Panc1 (cell line): ENCODE measurements at regions of chr3 and their contacts with region 1.

Region 1: GRCh38 chr3:68876112-68876713 is 56.1 kb downstream of the TAFA4 start:
- DNase-seq: peak; percentile 47
- ATAC-seq: peak; percentile 60; the same call in 1 of the 2 replicates
- H3K4me3 ChIP-seq: no peak overlapping the region
- H3K27ac ChIP-seq: no peak overlapping the region
- H3K4me1 ChIP-seq: no peaks in the 10 kb centered on the region
- H3K27me3 ChIP-seq: no peaks in the 10 kb centered on the region; the same call in 1 of the 2 replicates
- CTCF ChIP-seq: peak; percentile 74; the same call in 1 of the 2 replicates

Region 2: DNA sequence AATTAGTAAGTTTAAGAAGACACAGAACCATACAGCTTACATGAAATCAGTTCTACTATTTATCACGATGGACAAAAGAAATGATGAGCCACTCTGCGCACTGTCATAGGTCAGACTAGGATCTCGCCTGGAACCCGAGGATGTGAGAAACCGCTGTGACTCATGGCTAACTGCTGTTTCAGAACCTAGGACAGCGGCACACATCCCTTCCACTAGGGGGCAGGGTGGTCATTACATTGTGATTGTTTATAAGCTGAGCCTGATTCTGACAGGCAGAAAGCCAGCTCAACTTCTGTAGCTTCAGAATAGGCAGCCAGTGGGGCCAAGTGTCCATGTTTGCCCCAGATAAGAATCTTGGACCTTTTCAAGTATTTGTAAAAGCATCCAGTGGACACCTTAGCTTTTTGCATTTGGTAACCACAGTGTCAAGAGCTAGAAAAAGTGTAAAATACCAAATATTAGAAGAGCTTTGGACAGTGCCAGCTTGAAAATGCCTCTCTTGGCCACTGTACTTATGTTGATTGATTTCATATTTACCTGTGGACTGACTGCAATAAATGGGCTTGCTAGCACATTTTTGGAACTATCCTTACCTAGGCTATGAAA is 1762.3 kb before region 1 on chr3:
- CTCF ChIA-PET with region 1: no interaction called
- POLR2A ChIA-PET with region 1: no interaction called
- in situ Hi-C with region 1: no loop called
- intact Hi-C with region 1: loop called (anchors 5 kb)
- DNase-seq: peak; percentile 74
- ATAC-seq: peak; percentile 80
- H3K4me3 ChIP-seq: no peak overlapping the region
- H3K27ac ChIP-seq: no peak overlapping the region
- H3K4me1 ChIP-seq: no peaks in the 10 kb centered on the region
- H3K27me3 ChIP-seq: no peaks in the 10 kb centered on the region
- CTCF ChIP-seq: peak; percentile 82

Region 3: DNA sequence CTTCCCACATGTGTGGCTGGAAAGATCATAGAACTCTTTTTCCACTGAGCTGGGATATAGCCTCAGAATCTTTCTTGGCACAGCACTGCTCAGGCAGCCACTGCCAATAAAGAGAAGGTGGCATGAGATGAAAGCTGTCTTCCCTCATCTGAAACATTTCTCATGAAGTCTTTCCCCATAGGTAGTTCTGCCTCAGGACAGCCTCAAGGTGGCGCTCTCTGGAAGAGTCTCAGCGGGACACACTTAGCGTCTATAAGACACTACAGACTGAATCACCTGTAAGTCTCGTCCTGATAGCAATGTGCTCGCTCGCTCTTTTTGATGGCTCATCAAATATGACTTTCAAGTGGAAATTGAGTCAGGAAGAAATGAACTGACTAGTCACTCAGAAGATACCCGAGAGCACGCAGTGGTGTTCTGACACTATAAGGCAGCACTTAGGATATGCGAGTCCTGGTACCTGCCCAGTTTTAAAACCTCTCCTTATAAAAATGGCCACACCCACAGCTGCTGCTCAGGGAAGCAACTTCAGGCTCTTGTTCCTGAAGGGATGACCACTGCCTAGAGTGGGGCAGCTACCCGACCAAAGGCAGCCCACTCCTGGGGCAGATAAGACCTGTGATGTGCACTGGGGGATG is 1491.3 kb before region 1 on chr3:
- CTCF ChIA-PET with region 1: no interaction called
- POLR2A ChIA-PET with region 1: no interaction called
- in situ Hi-C with region 1: no loop called
- intact Hi-C with region 1: loop called (anchors 5 kb)
- DNase-seq: no peak
- ATAC-seq: no peak
- H3K4me3 ChIP-seq: no peak overlapping the region
- H3K27ac ChIP-seq: no peak overlapping the region
- H3K4me1 ChIP-seq: no peaks in the 10 kb centered on the region
- H3K27me3 ChIP-seq: no peaks in the 10 kb centered on the region
- CTCF ChIP-seq: peak; percentile 69